Activated naive CD4-positive, alpha-beta T cell treated with anti-CD3 and anti-CD28 coated beads for 36 hours (primary cell): ENCODE measurements at regions of chr18 and their contacts with region 1.

Region 1: GRCh38 chr18:23586249-23587196 is at the start of gene NPC1:
- DNase-seq: peak; percentile 91
- H3K4me3 Mint-ChIP-seq: peak within 1 kb of the TSS; percentile 91
- H3K27ac Mint-ChIP-seq: peak within 1 kb of the TSS; percentile 95
- H3K4me1 Mint-ChIP-seq: peaks cover 34% of the 10 kb centered on the region
- H3K27me3 Mint-ChIP-seq: no peaks in the 10 kb centered on the region
- total RNA-seq, gene NPC1: 25.9 to 27.9 TPM

Region 2: GRCh38 chr18:22790545-22791309 is 795.8 kb before region 1 on chr18:
- CTCF ChIA-PET with region 1: no interaction called
- intact Hi-C with region 1: loop called (anchors 10 kb)
- DNase-seq: no peak
- H3K4me3 Mint-ChIP-seq: no peak overlapping the region
- H3K27ac Mint-ChIP-seq: no peak overlapping the region
- H3K4me1 Mint-ChIP-seq: no peaks in the 10 kb centered on the region
- H3K27me3 Mint-ChIP-seq: peaks cover 15% of the 10 kb centered on the region

Region 3: DNA sequence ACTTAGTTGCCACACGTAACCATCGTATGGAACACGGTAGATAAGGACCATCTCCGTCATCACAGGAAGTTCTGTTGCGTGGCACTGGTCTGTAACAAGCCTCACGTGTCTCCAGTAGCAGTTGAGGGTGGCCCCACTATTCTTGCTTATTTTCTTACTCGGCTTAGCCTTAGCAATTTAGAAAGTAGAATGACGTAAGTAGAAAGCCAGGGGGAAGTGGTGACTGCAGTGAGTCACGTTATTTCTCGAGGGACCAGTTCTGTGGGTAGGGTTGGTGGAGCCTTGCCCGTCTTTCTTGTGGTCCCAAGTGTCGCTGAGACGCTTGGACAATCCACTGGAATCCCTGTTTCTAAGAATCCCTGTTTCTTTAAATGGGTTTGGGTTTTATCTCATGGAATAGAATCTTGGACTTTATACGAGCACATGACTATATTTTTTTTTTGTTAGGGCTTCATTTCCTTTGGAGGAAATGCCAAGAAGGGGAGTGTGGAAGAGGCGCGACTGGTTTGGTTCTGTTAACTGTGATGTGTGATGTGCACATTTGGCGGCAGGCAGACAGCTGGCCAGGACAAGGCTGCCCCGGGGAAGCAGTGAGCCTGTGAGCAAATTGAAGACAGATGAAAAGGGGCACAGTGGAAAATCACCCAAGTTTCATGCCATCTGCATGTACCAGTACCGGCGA is 355.0 kb before region 1 on chr18:
- CTCF ChIA-PET with region 1: no interaction called
- intact Hi-C with region 1: loop called (anchors 5 kb)
- DNase-seq: peak; percentile 91
- H3K4me3 Mint-ChIP-seq: no peak overlapping the region
- H3K27ac Mint-ChIP-seq: peak overlapping the region; percentile 94
- H3K4me1 Mint-ChIP-seq: peaks cover 45% of the 10 kb centered on the region
- H3K27me3 Mint-ChIP-seq: no peaks in the 10 kb centered on the region

Region 4: DNA sequence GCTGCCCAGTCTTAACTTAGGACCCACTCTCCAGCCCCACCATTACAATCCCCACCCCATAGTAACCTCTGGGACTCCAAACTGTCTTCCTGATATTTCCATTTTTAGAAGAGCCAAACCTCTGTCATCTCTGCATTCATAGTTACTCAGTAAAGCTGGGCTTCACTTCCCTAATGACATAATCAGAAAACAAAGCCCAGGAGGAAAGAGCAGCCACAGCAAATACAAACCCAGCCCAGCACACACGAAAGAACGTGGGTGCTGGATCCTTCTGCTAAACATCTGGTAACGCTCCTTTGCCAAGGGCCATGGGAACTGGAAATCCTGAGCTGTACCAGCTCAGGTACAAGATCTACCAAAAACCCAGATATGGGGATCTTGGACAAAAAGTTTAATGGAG is 170.2 kb before region 1 on chr18:
- CTCF ChIA-PET with region 1: no interaction called
- intact Hi-C with region 1: no loop called
- DNase-seq: no peak
- H3K4me3 Mint-ChIP-seq: no peak overlapping the region
- H3K27ac Mint-ChIP-seq: peak overlapping the region; percentile 35
- H3K4me1 Mint-ChIP-seq: no peaks in the 10 kb centered on the region
- H3K27me3 Mint-ChIP-seq: no peaks in the 10 kb centered on the region

Region 5: GRCh38 chr18:23515911-23516546 is 70.5 kb before region 1 on chr18:
- CTCF ChIA-PET with region 1: interaction called, 22 read pairs
- intact Hi-C with region 1: loop called (anchors 1 kb)
- DNase-seq: peak; percentile 89
- H3K4me3 Mint-ChIP-seq: no peak overlapping the region
- H3K27ac Mint-ChIP-seq: peak overlapping the region; percentile 60
- H3K4me1 Mint-ChIP-seq: peaks cover 7% of the 10 kb centered on the region
- H3K27me3 Mint-ChIP-seq: no peaks in the 10 kb centered on the region

Region 6: GRCh38 chr18:23540867-23541266 is 45.7 kb before region 1 on chr18:
- CTCF ChIA-PET with region 1: interaction called, 4 read pairs
- intact Hi-C with region 1: loop called (anchors 2 kb)
- DNase-seq: peak; percentile 27
- H3K4me3 Mint-ChIP-seq: peak overlapping the region; percentile 5
- H3K27ac Mint-ChIP-seq: peak overlapping the region; percentile 19
- H3K4me1 Mint-ChIP-seq: peaks cover 35% of the 10 kb centered on the region
- H3K27me3 Mint-ChIP-seq: no peaks in the 10 kb centered on the region

Region 7: DNA sequence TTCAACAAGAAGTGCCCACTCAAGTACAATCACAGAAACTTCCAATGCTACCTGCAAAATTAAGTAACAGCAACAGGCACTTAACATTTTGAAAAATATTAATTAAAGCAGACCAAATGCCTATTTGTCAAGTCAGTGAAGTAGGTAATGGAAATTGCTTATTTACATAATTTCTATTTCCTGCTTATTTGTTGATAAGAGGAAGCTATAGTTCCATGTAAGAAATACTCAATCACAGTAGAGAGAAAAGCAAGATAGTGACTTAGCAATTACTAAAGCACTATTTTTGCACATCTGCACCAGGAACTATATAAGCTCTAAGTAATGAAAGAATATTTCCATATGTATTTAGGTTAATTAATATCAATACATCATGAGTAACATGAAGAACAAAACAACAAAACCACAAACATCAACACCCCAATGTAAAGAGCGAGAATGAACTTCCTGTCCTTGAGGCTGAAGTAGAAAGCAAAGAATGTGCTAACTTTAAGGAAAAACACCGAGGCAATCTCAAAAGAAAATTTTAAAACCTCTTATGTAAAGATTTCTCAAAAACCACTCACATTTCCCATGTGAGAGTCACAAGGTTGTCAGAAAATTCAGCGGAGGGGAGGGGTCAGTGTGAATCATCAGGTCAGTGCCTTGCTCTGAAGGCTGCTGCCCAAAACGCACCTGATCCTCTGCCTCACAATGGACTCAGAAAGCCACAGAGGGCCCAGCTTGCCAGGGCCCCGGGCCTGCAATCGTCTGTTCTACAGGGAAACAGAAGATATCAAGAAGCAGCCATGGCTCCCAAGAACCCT is 12.7 kb before region 1 on chr18:
- CTCF ChIA-PET with region 1: interaction called, 3 read pairs
- intact Hi-C with region 1: loop called (anchors 1 kb)
- DNase-seq: peak; percentile 64
- H3K4me3 Mint-ChIP-seq: no peak overlapping the region
- H3K27ac Mint-ChIP-seq: peak overlapping the region; percentile 83
- H3K4me1 Mint-ChIP-seq: peaks cover 32% of the 10 kb centered on the region
- H3K27me3 Mint-ChIP-seq: no peaks in the 10 kb centered on the region

Region 8: GRCh38 chr18:23719634-23720201 is 133.2 kb after region 1 on chr18:
- CTCF ChIA-PET with region 1: no interaction called
- intact Hi-C with region 1: no loop called
- DNase-seq: no peak
- H3K4me3 Mint-ChIP-seq: no peak overlapping the region
- H3K27ac Mint-ChIP-seq: no peak overlapping the region
- H3K4me1 Mint-ChIP-seq: no peaks in the 10 kb centered on the region
- H3K27me3 Mint-ChIP-seq: peaks cover 2% of the 10 kb centered on the region

Region 9: GRCh38 chr18:23779696-23780303 is 193.3 kb after region 1 on chr18:
- CTCF ChIA-PET with region 1: no interaction called
- intact Hi-C with region 1: no loop called
- DNase-seq: no peak
- H3K4me3 Mint-ChIP-seq: no peak overlapping the region
- H3K27ac Mint-ChIP-seq: no peak overlapping the region
- H3K4me1 Mint-ChIP-seq: no peaks in the 10 kb centered on the region
- H3K27me3 Mint-ChIP-seq: no peaks in the 10 kb centered on the region

Region 10: DNA sequence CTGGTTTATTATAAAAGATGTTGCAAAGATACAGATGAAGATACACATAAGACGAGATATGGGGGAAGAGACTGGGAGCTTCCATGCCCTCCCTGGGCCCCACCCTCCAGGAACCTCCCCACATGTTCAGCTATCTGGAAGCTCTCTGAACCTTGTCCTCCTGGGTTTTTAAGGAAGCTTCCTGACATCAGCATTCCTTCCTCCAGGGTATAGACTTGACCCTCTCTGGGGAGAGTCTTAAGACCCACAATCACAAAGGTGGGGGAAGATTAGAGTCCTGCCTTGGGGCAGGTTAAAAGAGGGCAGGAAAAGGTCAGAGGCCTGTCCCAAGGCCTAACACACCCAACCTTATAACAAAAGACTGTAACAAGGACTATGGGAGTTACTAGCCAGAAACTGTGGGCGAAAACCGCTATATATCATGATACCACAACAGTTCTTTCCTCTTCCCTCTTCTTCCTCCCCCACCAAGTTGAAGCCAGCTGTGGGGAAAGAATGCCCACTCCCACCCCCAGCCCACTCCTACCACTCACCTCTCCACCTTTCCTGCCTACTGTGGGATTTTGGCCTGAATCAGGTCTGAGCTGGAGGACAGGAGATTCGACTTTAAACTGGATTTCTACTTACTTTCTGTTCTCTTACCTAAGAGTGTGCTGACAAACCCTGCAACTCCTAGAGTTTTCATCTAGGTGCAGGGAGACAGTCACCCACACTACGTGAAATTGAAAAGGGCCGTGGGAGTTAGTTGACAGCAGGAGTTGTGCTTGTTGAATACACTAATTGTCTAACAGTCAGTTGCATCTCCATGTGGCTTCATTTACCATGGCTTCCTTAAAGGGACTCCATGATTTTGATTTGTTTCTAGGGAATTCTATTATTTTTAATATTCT is 207.7 kb after region 1 on chr18:
- CTCF ChIA-PET with region 1: no interaction called
- intact Hi-C with region 1: no loop called
- DNase-seq: no peak
- H3K4me3 Mint-ChIP-seq: no peak overlapping the region
- H3K27ac Mint-ChIP-seq: no peak overlapping the region
- H3K4me1 Mint-ChIP-seq: peaks cover 3% of the 10 kb centered on the region
- H3K27me3 Mint-ChIP-seq: no peaks in the 10 kb centered on the region

Region 11: DNA sequence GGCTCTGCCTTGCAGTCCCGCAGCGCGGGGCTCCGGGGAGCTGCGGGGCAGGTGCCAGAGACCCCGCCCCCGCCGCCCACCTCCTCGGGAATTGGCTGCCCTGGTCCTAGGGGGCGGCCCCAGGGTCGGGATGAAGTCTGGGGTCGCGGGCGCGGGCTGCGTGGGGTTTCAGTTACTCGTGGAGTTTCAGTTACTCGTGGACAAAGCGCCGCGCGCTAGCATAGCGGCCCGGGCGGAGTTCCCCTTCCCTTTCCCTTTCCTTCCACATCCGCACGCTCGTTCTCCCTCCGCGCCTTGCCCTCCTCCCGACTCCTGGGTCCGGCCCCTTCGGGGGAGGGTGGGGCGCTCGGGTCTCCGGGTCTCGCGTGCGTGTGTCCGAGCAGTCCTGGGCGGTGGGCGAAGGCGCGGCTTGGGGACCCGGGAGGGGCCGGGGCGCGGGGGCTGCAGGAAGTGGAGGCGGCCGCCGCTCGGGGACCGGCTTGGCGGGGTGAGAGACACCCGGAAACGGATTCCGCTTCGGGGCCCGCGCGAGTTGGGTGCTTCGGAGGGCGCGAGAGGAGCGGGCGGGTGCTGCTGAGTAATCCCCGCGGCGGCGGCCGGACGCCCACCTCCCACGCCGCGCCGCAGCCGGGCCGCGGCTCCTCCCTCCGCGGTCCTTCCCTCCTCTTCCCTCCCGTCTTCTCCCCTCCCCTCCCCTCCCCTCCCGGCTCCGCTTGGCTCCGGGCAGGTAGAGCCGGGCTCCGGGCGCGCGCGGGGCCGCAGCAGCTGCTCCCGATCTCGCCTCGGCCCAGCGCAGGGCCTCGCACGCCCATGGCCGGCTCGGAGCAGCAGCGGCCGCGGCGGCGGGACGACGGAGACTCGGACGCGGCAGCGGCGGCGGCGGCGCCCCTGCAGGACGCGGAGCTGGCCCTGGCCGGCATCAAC is 427.8 kb after region 1 on chr18 and contains the start of gene TTC39C:
- CTCF ChIA-PET with region 1: no interaction called
- intact Hi-C with region 1: loop called (anchors 5 kb)
- DNase-seq: peak; percentile 87
- H3K4me3 Mint-ChIP-seq: peak within 1 kb of the TSS; percentile 91
- H3K27ac Mint-ChIP-seq: peak within 1 kb of the TSS; percentile 89
- H3K4me1 Mint-ChIP-seq: peaks cover 69% of the 10 kb centered on the region
- H3K27me3 Mint-ChIP-seq: no peaks in the 10 kb centered on the region
- total RNA-seq, gene TTC39C: 39.9 to 44.2 TPM